ENCODE measurements at regions of chr19 and their contacts with region 1.

Region 1: DNA sequence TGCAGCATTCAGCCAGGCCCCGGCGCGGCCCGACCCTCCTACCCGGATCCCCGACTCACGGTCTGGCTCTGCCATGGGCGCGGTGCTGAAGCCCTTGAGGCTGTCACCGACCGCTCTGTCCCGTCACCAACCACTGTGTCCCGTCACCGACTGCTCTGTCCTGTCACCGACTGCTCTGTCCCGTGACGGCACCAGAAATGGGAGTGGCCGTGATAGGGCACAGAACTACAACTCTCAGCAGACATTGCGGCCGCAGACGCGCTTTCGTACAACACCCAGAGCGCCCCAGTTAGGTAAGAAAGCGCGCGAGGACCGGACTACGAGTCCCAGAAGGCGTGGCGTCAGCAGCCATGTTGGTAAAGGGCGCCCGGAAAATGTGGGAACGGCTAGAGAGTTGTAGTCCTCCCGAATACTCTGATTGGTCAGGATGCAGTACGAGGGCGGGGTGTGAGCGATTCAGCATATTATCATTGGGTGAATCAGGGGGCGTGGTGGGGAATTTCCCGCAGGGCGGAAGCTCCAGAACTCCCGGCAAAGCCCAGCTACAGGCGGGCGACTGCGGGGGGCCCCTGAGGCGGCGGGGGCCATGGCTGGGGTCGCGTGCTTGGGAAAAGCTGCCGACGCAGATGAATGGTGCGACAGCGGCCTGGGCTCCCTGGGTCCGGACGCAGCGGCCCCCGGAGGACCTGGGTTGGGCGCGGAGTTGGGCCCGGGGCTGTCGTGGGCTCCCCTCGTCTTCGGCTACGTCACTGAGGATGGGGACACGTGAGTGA is at the starts of genes NFKBIB and SIRT2:
- DNase-seq: peak; percentile 100
- H3K4me3 ChIP-seq: peak within 1 kb of the TSS; percentile 71 to 82 (median 79)
- H3K4me3 Mint-ChIP-seq: peak within 1 kb of the TSS; percentile 90 to 91
- H3K27ac ChIP-seq: peak within 1 kb of the TSS; percentile 72 to 97
- H3K27ac Mint-ChIP-seq: peak within 1 kb of the TSS; percentile 90 to 99 (median 97)
- H3K4me1 ChIP-seq: peaks cover 18 to 28% of the 10 kb centered on the region in 2 donors
- H3K4me1 Mint-ChIP-seq: peaks cover 30% of the 10 kb centered on the region
- H3K27me3 ChIP-seq: no peaks in the 10 kb centered on the region
- H3K27me3 Mint-ChIP-seq: peaks cover 0 to 1% (median 0%) of the 10 kb centered on the region in 3 donors
- CTCF ChIP-seq: no peak
- polyA plus RNA-seq, gene NFKBIB: 6.7 to 29.4 (median 9.0) TPM
- polyA plus RNA-seq, gene SIRT2: 57.5 to 65.9 (median 64.3) TPM

Region 2: DNA sequence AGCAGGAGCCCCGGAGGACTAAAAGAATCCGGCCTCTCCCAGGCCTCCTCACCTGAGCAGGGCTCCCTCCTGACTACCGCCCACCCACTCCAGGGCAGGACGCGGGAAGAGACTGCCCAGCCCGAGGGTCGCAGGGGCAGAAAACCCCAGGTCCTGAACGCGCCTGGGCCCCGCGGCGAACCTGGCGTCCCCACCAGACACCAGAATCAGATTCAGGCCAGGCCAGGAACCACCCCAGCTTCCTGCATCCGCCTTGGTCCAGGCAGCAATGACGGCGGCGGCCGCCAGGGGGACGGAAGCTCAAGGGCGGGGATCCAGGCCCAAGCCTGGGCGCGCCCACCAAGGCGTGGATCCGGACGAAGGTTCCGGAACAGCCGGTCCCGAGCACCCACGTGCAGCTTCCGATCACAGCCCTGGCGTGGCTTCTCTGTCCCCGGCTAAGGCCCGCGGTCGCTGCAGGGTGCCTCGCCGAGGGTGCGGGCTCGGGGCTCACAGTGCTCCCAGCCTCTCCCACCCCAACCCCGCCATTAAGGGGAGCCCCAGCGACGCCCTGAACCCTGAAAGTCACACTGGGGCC is 129.9 kb before region 1 on chr19:
- intact Hi-C with region 1: loop called in 1 of 2 experiments (anchors 10 kb)
- DNase-seq: peak; percentile 84 to 92 (median 87)
- H3K4me3 ChIP-seq: peak overlapping the region; percentile 27 to 75 (median 44)
- H3K4me3 Mint-ChIP-seq: peak overlapping the region; percentile 57 to 68
- H3K27ac ChIP-seq: peak overlapping the region; percentile 67 to 81
- H3K27ac Mint-ChIP-seq: peak overlapping the region; percentile 76 to 90 (median 86)
- H3K4me1 ChIP-seq: peaks cover 5 to 13% of the 10 kb centered on the region in 2 donors
- H3K4me1 Mint-ChIP-seq: peaks cover 5% of the 10 kb centered on the region
- H3K27me3 ChIP-seq: no peaks in the 10 kb centered on the region
- H3K27me3 Mint-ChIP-seq: peaks cover 0 to 4% (median 3%) of the 10 kb centered on the region in 3 donors
- CTCF ChIP-seq: peak; percentile 95

Region 3: GRCh38 chr19:38831142-38831605 is 68.5 kb before region 1 on chr19:
- intact Hi-C with region 1: loop called in 1 of 2 experiments (anchors 5 kb)
- DNase-seq: peak; percentile 55 to 88 (median 69)
- H3K4me3 ChIP-seq: peak overlapping the region; percentile 60 to 81 (median 67)
- H3K4me3 Mint-ChIP-seq: peak overlapping the region; percentile 88 to 97
- H3K27ac ChIP-seq: peak overlapping the region; percentile 82 to 96
- H3K27ac Mint-ChIP-seq: peak overlapping the region; percentile 90 to 95 (median 94)
- H3K4me1 ChIP-seq: peaks cover 33 to 35% of the 10 kb centered on the region in 2 donors
- H3K4me1 Mint-ChIP-seq: peaks cover 29% of the 10 kb centered on the region
- H3K27me3 ChIP-seq: no peaks in the 10 kb centered on the region
- H3K27me3 Mint-ChIP-seq: no peaks in the 10 kb centered on the region
- CTCF ChIP-seq: no peak

Region 4: GRCh38 chr19:38849860-38850435 is 49.7 kb before region 1 on chr19 and contains the start of gene HNRNPL:
- intact Hi-C with region 1: loop called (anchors 1 to 5 kb)
- DNase-seq: peak; percentile 100
- H3K4me3 ChIP-seq: peak within 1 kb of the TSS; percentile 80 to 90 (median 86)
- H3K4me3 Mint-ChIP-seq: peak within 1 kb of the TSS; percentile 88 to 94
- H3K27ac ChIP-seq: peak within 1 kb of the TSS; percentile 98 to 99
- H3K27ac Mint-ChIP-seq: peak within 1 kb of the TSS; percentile 98 to 99 (median 99)
- H3K4me1 ChIP-seq: peaks cover 32 to 42% of the 10 kb centered on the region in 2 donors
- H3K4me1 Mint-ChIP-seq: peaks cover 29% of the 10 kb centered on the region
- H3K27me3 ChIP-seq: no peaks in the 10 kb centered on the region
- H3K27me3 Mint-ChIP-seq: peaks cover 0 to 5% (median 1%) of the 10 kb centered on the region in 3 donors
- CTCF ChIP-seq: peak; percentile 23
- polyA plus RNA-seq, gene HNRNPL: 51.9 to 234 (median 58.7) TPM

Region 5: GRCh38 chr19:38877781-38878574 is 21.7 kb before region 1 on chr19 and contains the start of gene RINL:
- intact Hi-C with region 1: no loop called
- DNase-seq: peak; percentile 58 to 61 (median 58)
- H3K4me3 ChIP-seq: peak within 1 kb of the TSS; percentile 31 to 76 (median 49)
- H3K4me3 Mint-ChIP-seq: peak within 1 kb of the TSS; percentile 77 to 88
- H3K27ac ChIP-seq: peak within 1 kb of the TSS; percentile 57 to 88
- H3K27ac Mint-ChIP-seq: peak within 1 kb of the TSS; percentile 81 to 94 (median 88)
- H3K4me1 ChIP-seq: peaks cover 18 to 19% of the 10 kb centered on the region in 2 donors
- H3K4me1 Mint-ChIP-seq: peaks cover 16% of the 10 kb centered on the region
- H3K27me3 ChIP-seq: no peaks in the 10 kb centered on the region
- H3K27me3 Mint-ChIP-seq: no peaks in the 10 kb centered on the region
- CTCF ChIP-seq: no peak
- polyA plus RNA-seq, gene RINL: 4.1 to 13.5 (median 7.2) TPM

Region 6: GRCh38 chr19:38929929-38930775 is 30.5 kb after region 1 on chr19 and contains the start of gene SARS2:
- intact Hi-C with region 1: loop called (anchors 1 to 5 kb)
- DNase-seq: peak; percentile 94 to 97 (median 94)
- H3K4me3 ChIP-seq: peak within 1 kb of the TSS; percentile 70 to 92 (median 86)
- H3K4me3 Mint-ChIP-seq: peak within 1 kb of the TSS; percentile 90 to 96
- H3K27ac ChIP-seq: peak within 1 kb of the TSS; percentile 69 to 96
- H3K27ac Mint-ChIP-seq: peak within 1 kb of the TSS; percentile 94 to 98 (median 97)
- H3K4me1 ChIP-seq: peaks cover 16 to 25% of the 10 kb centered on the region in 2 donors
- H3K4me1 Mint-ChIP-seq: peaks cover 15% of the 10 kb centered on the region
- H3K27me3 ChIP-seq: no peaks in the 10 kb centered on the region
- H3K27me3 Mint-ChIP-seq: peaks cover 0 to 2% (median 0%) of the 10 kb centered on the region in 3 donors
- CTCF ChIP-seq: peak; percentile 100
- polyA plus RNA-seq, gene SARS2: 8.1 to 21.9 (median 8.3) TPM

Region 7: GRCh38 chr19:39237200-39238184 is 337.9 kb after region 1 on chr19:
- intact Hi-C with region 1: no loop called
- DNase-seq: no peak
- H3K4me3 ChIP-seq: no peak overlapping the region
- H3K4me3 Mint-ChIP-seq: peak overlapping the region; percentile 56 to 64
- H3K27ac ChIP-seq: no peak overlapping the region
- H3K27ac Mint-ChIP-seq: no peak overlapping the region
- H3K4me1 ChIP-seq: no peaks in the 10 kb centered on the region
- H3K4me1 Mint-ChIP-seq: peaks cover 5% of the 10 kb centered on the region
- H3K27me3 ChIP-seq: no peaks in the 10 kb centered on the region
- H3K27me3 Mint-ChIP-seq: peaks cover 2 to 7% (median 4%) of the 10 kb centered on the region in 3 donors
- CTCF ChIP-seq: no peak

Measured in CD14-positive monocyte (primary cell).